ENCODE measurements at regions of chr7 and their contacts with region 1.

Region 1: GRCh38 chr7:26011039-26011696 is 140.8 kb upstream of the NFE2L3 start:
- DNase-seq: no peak
- ATAC-seq: no peak
- H3K4me3 ChIP-seq: no peak overlapping the region
- H3K27ac ChIP-seq: no peak overlapping the region
- H3K4me1 ChIP-seq: peaks cover 8 to 25% (median 17%) of the 10 kb centered on the region in 3 donors
- H3K27me3 ChIP-seq: no peaks in the 10 kb centered on the region
- CTCF ChIP-seq: no peak

Region 2: DNA sequence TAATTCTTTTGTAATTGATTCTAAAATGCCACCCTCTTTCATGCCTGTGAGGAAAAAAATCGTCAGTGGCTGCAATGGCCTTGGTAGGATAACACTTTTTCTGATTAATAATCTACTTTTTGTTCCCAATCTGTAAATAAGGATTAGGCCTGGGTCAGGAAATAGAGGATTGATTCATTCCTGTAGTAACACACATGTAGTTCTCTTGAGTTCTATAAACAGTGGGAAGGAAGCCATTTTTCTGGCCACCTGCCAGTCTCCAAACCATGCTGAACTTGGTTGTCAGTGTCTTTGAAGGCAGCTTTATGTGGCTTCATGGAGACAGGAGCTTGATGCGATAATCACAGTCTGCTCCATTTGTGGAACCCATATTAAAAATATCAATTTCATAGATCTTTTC is 28.5 kb before region 1 on chr7:
- intact Hi-C with region 1: no loop called
- DNase-seq: no peak
- ATAC-seq: peak in 1 of 4 donors; percentile 53
- H3K4me3 ChIP-seq: no peak overlapping the region
- H3K27ac ChIP-seq: no peak overlapping the region
- H3K4me1 ChIP-seq: no peaks in the 10 kb centered on the region
- H3K27me3 ChIP-seq: no peaks in the 10 kb centered on the region
- CTCF ChIP-seq: no peak

Region 3: GRCh38 chr7:26061688-26062150 is 50.6 kb after region 1 on chr7:
- intact Hi-C with region 1: loop called in 1 of 3 experiments (anchors 10 kb)
- DNase-seq: peak in 5 of 6 donors; percentile 76 to 87 (median 84)
- ATAC-seq: peak; percentile 90 to 98 (median 97)
- H3K4me3 ChIP-seq: no peak overlapping the region
- H3K27ac ChIP-seq: peak overlapping the region in 2 of 4 donors; percentile 34 to 59
- H3K4me1 ChIP-seq: peaks cover 7 to 15% (median 14%) of the 10 kb centered on the region in 3 donors
- H3K27me3 ChIP-seq: no peaks in the 10 kb centered on the region
- CTCF ChIP-seq: peak; percentile 69 to 89 (median 78)